ENCODE measurements at regions of chr22 and their contacts with region 1.

Region 1: DNA sequence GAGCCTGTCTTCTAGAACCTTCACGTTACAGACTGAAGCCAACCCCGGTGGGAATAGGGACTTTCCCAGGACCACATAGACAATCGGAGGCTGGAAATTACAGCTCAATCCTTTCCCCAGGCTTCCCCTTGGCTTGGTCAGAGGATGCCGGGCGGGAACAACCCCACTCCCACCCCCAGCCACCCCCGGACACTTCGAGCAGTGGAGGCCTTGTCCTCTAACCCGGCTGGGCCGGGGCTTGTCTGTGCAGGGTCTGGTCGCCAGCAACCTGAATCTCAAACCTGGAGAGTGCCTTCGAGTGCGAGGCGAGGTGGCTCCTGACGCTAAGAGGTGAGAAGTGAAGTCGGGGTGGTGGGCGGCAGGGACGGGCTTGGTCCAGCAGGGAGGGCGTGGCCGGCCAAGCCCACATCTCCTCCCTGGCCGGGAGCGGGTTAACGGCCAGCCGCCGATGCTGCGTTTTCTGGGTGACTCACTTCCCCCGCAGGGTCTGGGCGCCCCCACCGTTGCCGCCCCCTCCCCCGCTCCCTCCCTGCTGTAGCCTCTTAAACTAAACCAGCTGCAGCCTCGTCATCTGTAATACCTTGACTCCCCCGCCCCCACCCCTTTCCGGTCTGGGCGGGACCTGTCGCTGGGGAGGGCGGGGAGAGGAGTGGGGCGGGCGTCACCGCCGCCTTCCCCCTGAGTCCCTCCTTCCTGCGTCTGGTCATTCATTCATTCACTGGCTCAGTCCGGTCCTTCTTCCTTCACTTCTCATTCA is 1.5 kb downstream of the LGALS1 start:
- DNase-seq: peak; percentile 90
- ATAC-seq: peak; percentile 65
- H3K4me3 Mint-ChIP-seq: peak overlapping the region; percentile 92
- H3K27ac Mint-ChIP-seq: peak overlapping the region; percentile 99
- H3K4me1 Mint-ChIP-seq: peaks cover 36% of the 10 kb centered on the region
- H3K27me3 Mint-ChIP-seq: no peaks in the 10 kb centered on the region

Region 2: DNA sequence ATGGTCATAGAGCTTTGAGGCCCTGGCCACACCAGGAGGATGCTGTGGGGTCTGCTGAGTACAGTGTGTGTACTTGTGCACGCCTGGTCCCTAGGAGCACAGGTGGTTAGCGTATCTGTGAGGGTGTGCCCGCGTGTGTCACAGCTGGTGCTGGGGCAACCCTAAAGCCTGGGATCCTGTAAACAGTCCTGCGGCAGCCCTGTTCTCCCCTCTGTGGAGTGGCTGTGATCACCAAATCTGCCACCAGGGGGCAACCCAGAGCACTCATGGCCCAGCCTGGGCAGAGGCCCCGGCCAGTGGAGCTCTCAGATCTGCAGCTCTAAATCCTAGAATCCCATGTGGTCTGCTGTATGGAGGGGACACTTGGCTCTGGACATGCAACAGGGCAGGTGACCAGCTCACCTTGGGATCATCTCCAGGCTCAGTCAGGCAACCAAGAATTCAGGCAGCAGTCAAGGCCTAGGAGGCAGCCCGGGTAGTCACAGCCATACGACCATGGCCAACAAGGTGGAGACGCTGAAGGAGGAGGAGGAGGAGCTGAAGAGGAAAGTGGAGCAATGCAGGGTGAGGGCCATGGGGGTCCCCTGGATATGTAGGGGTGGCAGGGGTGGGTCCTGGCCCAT is 33.6 kb before region 1 on chr22:
- POLR2A ChIA-PET with region 1: interaction called, 51 read pairs
- DNase-seq: peak; percentile 92
- ATAC-seq: peak; percentile 58
- H3K4me3 Mint-ChIP-seq: peak overlapping the region; percentile 66
- H3K27ac Mint-ChIP-seq: peak overlapping the region; percentile 79
- H3K4me1 Mint-ChIP-seq: peaks cover 27% of the 10 kb centered on the region
- H3K27me3 Mint-ChIP-seq: no peaks in the 10 kb centered on the region

Region 3: GRCh38 chr22:37812869-37813678 is 136.2 kb after region 1 on chr22:
- POLR2A ChIA-PET with region 1: no interaction called
- DNase-seq: no peak
- ATAC-seq: no peak
- H3K4me3 Mint-ChIP-seq: no peak overlapping the region
- H3K27ac Mint-ChIP-seq: no peak overlapping the region
- H3K4me1 Mint-ChIP-seq: peaks cover 8% of the 10 kb centered on the region
- H3K27me3 Mint-ChIP-seq: peaks cover 17% of the 10 kb centered on the region